A549 (cell line): ENCODE measurements at regions of chr19 and their contacts with region 1.

Region 1: GRCh38 chr19:46600384-46601317 is 479 bp upstream of the CALM3 start:
- DNase-seq: peak; percentile 98 to 100
- ATAC-seq: peak; percentile 85 to 92
- H3K4me3 ChIP-seq: peak overlapping the region; percentile 94
- H3K27ac ChIP-seq: peak overlapping the region; percentile 96 to 97
- H3K4me1 ChIP-seq: peaks cover 23% of the 10 kb centered on the region
- CTCF ChIP-seq: no peak
- EP300 ChIP-seq: no peak
- POLR2A ChIP-seq: peak; percentile 87
- RAD21 ChIP-seq: no peak

Region 2: GRCh38 chr19:46404753-46405468 is 195.7 kb before region 1 on chr19:
- CTCF ChIA-PET with region 1: no interaction called
- POLR2A ChIA-PET with region 1: no interaction called
- DNase-seq: peak; percentile 77 to 83
- ATAC-seq: peak; percentile 57 to 69
- H3K4me3 ChIP-seq: peak overlapping the region; percentile 53
- H3K27ac ChIP-seq: peak overlapping the region; percentile 90 to 92
- H3K4me1 ChIP-seq: no peaks in the 10 kb centered on the region
- CTCF ChIP-seq: peak; percentile 16; the same call in 2 of the 3 replicates
- EP300 ChIP-seq: no peak
- POLR2A ChIP-seq: no peak
- RAD21 ChIP-seq: peak; percentile 27 to 36; a peak in 3 of 5 replicates

Region 3: GRCh38 chr19:46461537-46461936 is 139.1 kb before region 1 on chr19:
- CTCF ChIA-PET with region 1: no interaction called
- POLR2A ChIA-PET with region 1: no interaction called
- DNase-seq: no peak
- ATAC-seq: no peak
- H3K4me3 ChIP-seq: no peak overlapping the region
- H3K27ac ChIP-seq: no peak overlapping the region
- H3K4me1 ChIP-seq: peaks cover 8% of the 10 kb centered on the region; the same call in 2 of the 3 replicates
- CTCF ChIP-seq: no peak
- EP300 ChIP-seq: no peak
- POLR2A ChIP-seq: no peak
- RAD21 ChIP-seq: no peak

Region 4: DNA sequence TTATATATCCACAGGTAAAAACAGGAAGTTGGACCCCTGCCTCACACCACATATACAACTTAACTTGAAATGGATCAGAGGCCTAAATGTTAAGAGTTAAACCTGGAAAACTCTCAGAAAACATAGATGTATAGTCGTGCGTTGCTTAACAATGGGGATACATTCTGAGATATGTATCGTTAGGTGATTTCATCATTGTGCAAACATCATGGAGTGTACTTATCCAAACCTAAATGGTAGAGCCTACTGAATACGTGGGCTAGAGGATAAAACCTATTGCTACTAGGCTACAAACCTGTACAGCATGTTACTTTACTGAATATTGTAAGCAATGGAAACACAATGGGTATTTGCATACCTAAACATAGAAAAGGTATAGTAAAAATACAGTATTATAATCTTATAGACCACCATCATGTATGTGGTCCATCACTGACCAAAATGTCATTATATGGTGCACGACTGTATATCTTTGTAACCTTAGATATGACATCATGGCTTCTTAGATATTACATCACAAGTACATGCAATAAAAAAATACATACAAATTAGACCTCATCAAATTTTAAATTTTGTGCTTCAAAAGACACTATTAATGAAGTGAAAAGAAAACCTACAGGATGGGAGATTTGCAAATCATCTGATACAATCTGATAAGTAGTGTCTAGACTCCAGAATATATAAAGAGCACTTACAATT is 14.2 kb before region 1 on chr19:
- CTCF ChIA-PET with region 1: interaction called, 10 read pairs
- POLR2A ChIA-PET with region 1: interaction called, 11 read pairs
- DNase-seq: no peak
- ATAC-seq: no peak
- H3K4me3 ChIP-seq: no peak overlapping the region
- H3K27ac ChIP-seq: no peak overlapping the region
- H3K4me1 ChIP-seq: no peaks in the 10 kb centered on the region
- CTCF ChIP-seq: no peak
- EP300 ChIP-seq: no peak
- POLR2A ChIP-seq: no peak
- RAD21 ChIP-seq: no peak

Region 5: GRCh38 chr19:46648060-46648960 is 47.7 kb after region 1 on chr19:
- CTCF ChIA-PET with region 1: no interaction called
- POLR2A ChIA-PET with region 1: no interaction called
- DNase-seq: no peak
- ATAC-seq: no peak
- H3K4me3 ChIP-seq: no peak overlapping the region
- H3K27ac ChIP-seq: no peak overlapping the region
- H3K4me1 ChIP-seq: no peaks in the 10 kb centered on the region
- CTCF ChIP-seq: no peak
- EP300 ChIP-seq: no peak
- POLR2A ChIP-seq: no peak
- RAD21 ChIP-seq: no peak

Region 6: GRCh38 chr19:46766569-46767317 is 166.1 kb after region 1 on chr19:
- CTCF ChIA-PET with region 1: no interaction called
- POLR2A ChIA-PET with region 1: no interaction called
- DNase-seq: peak in 1 of 2 experiments; percentile 75
- ATAC-seq: peak; percentile 79 to 84
- H3K4me3 ChIP-seq: no peak overlapping the region
- H3K27ac ChIP-seq: no peak overlapping the region
- H3K4me1 ChIP-seq: peaks cover 21% of the 10 kb centered on the region; the same call in 2 of the 3 replicates
- CTCF ChIP-seq: peak; percentile 87
- EP300 ChIP-seq: no peak
- POLR2A ChIP-seq: no peak
- RAD21 ChIP-seq: peak; percentile 38 to 59; a peak in 4 of 5 replicates